ENCODE measurements at regions of chr17 and their contacts with region 1.

Region 1: DNA sequence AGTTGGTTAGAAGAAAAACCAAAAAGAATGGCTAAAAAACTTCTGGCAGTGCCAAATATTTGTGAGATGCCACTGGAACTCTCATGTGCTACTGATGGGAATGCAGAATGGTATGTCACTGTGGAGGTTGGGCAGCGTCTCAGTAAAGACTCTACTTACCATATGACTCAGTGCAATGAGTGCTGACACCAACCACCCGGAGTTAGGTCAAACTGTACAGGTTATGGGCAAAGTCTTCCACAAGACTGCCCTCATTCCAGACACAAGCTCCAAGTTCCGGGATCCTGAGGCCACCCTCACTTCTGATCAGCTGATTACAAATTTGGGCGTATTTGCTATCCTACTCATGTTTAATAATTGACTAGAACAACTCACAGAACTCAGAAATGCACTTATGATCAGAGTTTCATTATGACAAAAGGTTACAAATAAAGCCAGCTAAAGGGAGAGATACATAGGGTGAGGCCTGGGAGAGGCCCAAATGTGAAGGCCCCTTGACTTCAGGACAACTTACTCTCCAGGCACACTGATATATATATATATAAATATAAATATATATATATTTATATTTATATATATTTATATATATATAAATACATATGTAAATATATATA is 114.9 kb downstream of the TRIM37 start:
- DNase-seq: no peak
- H3K4me3 ChIP-seq: no peak overlapping the region
- H3K27ac ChIP-seq: no peak overlapping the region
- H3K27me3 ChIP-seq: no peaks in the 10 kb centered on the region
- CTCF ChIP-seq: no peak

Region 2: DNA sequence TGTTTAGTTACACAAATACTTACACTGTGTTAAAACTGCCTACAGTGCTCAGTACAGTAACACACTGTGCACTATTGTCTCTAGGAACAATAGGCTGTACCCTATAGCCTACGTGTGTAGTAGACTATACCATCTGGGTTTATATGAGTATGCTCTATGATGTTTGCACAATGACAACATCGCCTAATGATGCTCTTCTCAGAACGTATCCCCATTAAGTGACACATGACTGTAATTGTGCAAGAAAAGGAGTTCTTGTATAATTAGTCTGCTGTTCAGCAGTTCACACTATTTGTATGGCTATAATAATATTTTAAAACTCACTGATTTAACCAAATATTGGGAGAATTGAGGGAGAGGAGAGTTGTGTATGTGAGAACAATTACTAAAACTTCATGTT is 58.9 kb before region 1 on chr17:
- CTCF ChIA-PET with region 1: interaction called, 12 read pairs
- POLR2A ChIA-PET with region 1: no interaction called
- DNase-seq: no peak
- H3K4me3 ChIP-seq: no peak overlapping the region
- H3K27ac ChIP-seq: no peak overlapping the region
- H3K27me3 ChIP-seq: no peaks in the 10 kb centered on the region
- CTCF ChIP-seq: no peak

Measured in AG04450 (cell line).